ENCODE measurements at regions of chr1 and their contacts with region 1.

Region 1: GRCh38 chr1:185652348-185652747 is 81.8 kb upstream of the HMCN1 start:
- DNase-seq: no peak
- H3K4me3 ChIP-seq: no peak overlapping the region
- H3K27ac ChIP-seq: no peak overlapping the region
- H3K4me1 ChIP-seq: peaks cover 2% of the 10 kb centered on the region
- H3K27me3 ChIP-seq: no peaks in the 10 kb centered on the region
- CTCF ChIP-seq: peak; percentile 12 to 17
- POLR2A ChIP-seq: no peak

Region 2: DNA sequence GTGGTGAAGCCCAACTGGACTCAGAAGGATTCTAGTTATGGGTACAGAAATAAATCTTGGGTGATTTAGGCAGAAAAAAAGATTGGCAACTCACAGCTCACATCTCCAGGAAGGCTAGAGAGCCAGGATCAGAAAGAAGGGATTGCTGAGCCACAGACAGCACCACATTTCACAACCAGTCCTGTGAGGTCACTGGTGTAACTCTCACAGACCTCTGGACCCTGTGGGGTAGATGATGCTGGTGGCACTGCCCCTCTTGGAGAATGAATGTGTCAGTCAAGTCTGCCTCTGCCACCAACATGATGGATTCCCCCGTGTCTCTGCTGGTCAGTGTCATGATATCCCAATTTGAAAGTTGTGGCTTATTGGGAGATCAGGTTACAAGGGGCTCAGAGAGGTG is 11.0 kb after region 1 on chr1:
- CTCF ChIA-PET with region 1: interaction called, 10 read pairs
- POLR2A ChIA-PET with region 1: no interaction called
- dilution Hi-C with region 1: no loop called
- intact Hi-C with region 1: no loop called
- DNase-seq: no peak
- H3K4me3 ChIP-seq: no peak overlapping the region
- H3K27ac ChIP-seq: no peak overlapping the region
- H3K4me1 ChIP-seq: no peaks in the 10 kb centered on the region
- H3K27me3 ChIP-seq: no peaks in the 10 kb centered on the region
- CTCF ChIP-seq: no peak
- POLR2A ChIP-seq: no peak

Region 3: GRCh38 chr1:185694081-185694480 is 41.7 kb after region 1 on chr1:
- CTCF ChIA-PET with region 1: no interaction called
- POLR2A ChIA-PET with region 1: no interaction called
- dilution Hi-C with region 1: no loop called
- intact Hi-C with region 1: loop called (anchors 1 kb)
- DNase-seq: peak; percentile 57
- H3K4me3 ChIP-seq: peak overlapping the region in 1 of 3 experiments; percentile 32
- H3K27ac ChIP-seq: peak overlapping the region; percentile 65
- H3K4me1 ChIP-seq: peaks cover 12% of the 10 kb centered on the region
- H3K27me3 ChIP-seq: no peaks in the 10 kb centered on the region
- CTCF ChIP-seq: no peak
- POLR2A ChIP-seq: no peak